BJ (cell line): ENCODE measurements at regions of chr1 and their contacts with region 1.

Region 1: GRCh38 chr1:171188388-171189266 is 3.5 kb downstream of the FMO2 start:
- DNase-seq: no peak
- H3K4me3 ChIP-seq: no peak overlapping the region
- H3K27me3 ChIP-seq: no peaks in the 10 kb centered on the region
- CTCF ChIP-seq: peak; percentile 72

Region 2: DNA sequence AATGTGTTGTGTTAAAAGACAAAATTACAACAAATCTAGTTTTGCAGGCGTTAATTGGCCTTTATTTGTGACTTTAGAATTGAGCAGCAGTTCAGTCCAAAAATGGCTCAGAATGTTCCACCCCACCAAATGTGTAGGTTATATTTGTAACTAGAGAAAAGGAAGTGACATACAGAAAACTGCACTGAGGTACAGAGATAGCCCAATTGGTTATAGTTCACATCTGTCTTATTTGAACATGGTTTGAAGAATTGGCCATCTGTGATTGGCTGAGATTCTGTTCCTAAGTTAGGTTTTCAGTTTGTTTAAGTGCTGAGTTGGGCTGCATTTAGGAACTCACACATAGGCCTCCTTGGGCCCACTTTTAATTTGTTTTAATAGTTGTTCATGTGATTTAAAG is 15.6 kb before region 1 on chr1:
- CTCF ChIA-PET with region 1: interaction called, 13 read pairs
- POLR2A ChIA-PET with region 1: no interaction called
- DNase-seq: no peak
- H3K4me3 ChIP-seq: no peak overlapping the region
- H3K27me3 ChIP-seq: no peaks in the 10 kb centered on the region
- CTCF ChIP-seq: no peak

Region 3: DNA sequence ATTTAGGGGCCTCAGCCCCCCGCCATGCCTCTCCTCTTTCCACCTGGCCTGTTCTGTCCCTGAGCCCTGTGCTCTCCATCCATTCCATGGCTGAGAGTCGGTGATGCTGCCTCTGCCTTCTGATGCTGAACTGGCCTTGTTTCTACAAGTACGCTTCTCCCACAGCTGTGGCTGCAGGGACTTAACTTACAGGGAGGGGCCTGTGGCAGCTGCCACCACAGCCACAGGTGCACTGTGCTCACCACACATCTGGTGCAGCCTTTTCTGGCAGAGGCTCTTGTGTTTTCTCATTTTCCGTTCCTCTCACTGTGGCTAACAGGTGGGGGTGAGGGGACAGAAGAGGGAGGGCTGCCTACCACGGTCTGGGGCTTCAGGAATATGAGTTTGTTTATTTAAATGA is 63.9 kb after region 1 on chr1:
- CTCF ChIA-PET with region 1: no interaction called
- POLR2A ChIA-PET with region 1: no interaction called
- DNase-seq: no peak
- H3K4me3 ChIP-seq: no peak overlapping the region
- H3K27me3 ChIP-seq: no peaks in the 10 kb centered on the region; the same call in 1 of the 2 replicates
- CTCF ChIP-seq: no peak

Region 4: DNA sequence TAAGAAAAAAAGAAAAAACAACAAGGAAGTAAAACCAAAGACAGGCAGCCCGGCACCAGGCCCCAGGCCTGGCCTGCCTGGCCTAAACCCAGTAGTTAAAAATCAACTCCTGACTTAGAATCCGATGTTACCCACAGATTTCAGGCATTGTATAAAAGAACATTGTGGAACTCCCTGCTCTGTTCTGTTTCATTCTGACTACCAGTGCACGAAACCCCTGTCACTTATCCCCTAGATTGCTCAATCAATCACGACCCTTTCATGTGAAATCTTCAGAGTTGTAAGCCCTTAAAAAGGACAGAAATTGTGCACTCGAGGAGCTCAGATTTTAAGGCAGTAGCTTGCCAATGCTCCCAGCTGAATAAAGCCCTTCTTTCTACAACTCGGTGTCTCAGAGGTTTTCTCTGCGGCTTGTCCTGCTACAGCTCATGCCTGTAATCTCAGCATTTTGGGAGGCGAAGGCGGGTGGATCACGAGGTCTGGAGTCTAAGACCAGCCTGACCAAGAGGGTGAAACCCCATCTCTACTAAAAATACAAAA is 417.8 kb after region 1 on chr1:
- CTCF ChIA-PET with region 1: no interaction called
- POLR2A ChIA-PET with region 1: no interaction called
- DNase-seq: no peak
- H3K4me3 ChIP-seq: no peak overlapping the region
- H3K27me3 ChIP-seq: no peaks in the 10 kb centered on the region
- CTCF ChIP-seq: no peak